PC-9 (cell line): ENCODE measurements at regions of chr5 and their contacts with region 1.

Region 1: GRCh38 chr5:75336625-75337339 is at the start of gene HMGCR:
- DNase-seq: peak; percentile 98
- H3K4me3 ChIP-seq: peak within 1 kb of the TSS; percentile 83
- H3K27ac ChIP-seq: peak within 1 kb of the TSS; percentile 78
- H3K4me1 ChIP-seq: peaks cover 47% of the 10 kb centered on the region
- H3K27me3 ChIP-seq: no peaks in the 10 kb centered on the region
- CTCF ChIP-seq: peak; percentile 11; the same call in 1 of the 2 replicates
- total RNA-seq, gene HMGCR: 55.0 and 86.8 TPM in 2 replicates

Region 2: DNA sequence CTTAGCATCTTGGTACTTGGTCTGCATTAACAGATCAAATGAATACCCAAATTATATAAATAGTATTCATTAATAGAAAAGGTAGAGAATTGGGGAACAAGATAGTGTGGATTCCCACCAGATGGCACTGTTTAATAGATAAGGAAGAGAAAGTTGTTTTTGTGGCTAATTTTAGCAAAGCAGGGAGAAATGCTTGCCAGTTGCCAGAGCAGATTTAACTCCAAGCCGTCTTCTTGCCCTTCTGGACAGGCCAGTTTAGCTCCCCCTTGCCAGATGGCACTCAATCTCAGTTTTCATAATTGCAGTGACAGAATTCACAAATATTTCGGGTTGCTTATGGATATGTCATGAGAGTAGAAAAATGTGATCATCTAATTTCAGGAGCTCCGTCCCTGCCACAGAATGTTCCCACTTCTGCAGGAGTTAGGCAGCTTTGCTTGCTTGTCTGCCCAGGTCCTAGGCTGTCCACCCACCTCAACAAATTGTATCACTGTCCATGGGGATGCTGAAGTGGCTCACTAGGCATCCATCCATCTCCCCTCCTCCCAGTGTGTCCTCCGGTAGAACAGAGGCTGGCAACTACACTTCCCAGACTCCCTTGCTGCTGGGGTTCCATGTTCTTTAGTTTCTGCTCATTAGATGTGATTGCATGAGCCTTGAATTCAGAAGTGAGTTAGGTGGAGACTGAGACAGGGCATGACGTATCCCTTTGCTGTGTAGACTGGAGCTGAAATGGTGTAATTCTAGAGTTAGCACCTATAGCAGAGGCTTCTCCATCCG is 663.6 kb before region 1 on chr5:
- CTCF ChIA-PET with region 1: no interaction called
- POLR2A ChIA-PET with region 1: no interaction called
- intact Hi-C with region 1: loop called (anchors 10 kb)
- DNase-seq: peak; percentile 29 to 66
- H3K4me3 ChIP-seq: no peak overlapping the region
- H3K27ac ChIP-seq: no peak overlapping the region
- H3K4me1 ChIP-seq: peaks cover 9% of the 10 kb centered on the region; the same call in 1 of the 2 replicates
- H3K27me3 ChIP-seq: no peaks in the 10 kb centered on the region
- CTCF ChIP-seq: peak; percentile 63

Region 3: DNA sequence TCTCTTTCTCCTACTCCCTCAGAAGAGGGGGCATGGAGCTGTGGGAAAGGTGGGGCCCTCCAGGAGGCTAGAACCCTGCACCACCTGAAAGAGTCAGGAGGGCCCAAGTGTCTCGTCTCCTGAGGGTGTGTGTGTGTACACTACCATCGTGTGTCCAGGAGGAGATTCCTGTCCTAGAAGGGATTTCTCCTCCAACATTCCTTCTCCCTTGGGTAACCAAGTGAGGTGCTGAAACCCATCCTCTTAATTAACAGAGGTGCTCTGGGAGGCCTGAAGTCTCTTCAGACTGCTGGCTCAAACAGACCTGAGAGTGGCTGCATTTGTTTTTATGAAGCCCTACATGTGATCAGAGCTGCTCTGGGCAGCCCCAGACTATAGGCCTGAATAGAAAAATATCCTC is 409.4 kb before region 1 on chr5:
- CTCF ChIA-PET with region 1: interaction called, 3 read pairs
- POLR2A ChIA-PET with region 1: no interaction called
- intact Hi-C with region 1: loop called (anchors 5 kb)
- DNase-seq: no peak
- H3K4me3 ChIP-seq: no peak overlapping the region
- H3K27ac ChIP-seq: no peak overlapping the region
- H3K4me1 ChIP-seq: no peaks in the 10 kb centered on the region
- H3K27me3 ChIP-seq: no peaks in the 10 kb centered on the region
- CTCF ChIP-seq: no peak

Region 4: GRCh38 chr5:75089137-75089536 is 247.6 kb before region 1 on chr5:
- CTCF ChIA-PET with region 1: no interaction called
- POLR2A ChIA-PET with region 1: interaction called, 18 read pairs
- intact Hi-C with region 1: no loop called
- DNase-seq: peak; percentile 44 to 79
- H3K4me3 ChIP-seq: no peak overlapping the region
- H3K27ac ChIP-seq: peak overlapping the region; percentile 6; the same call in 1 of the 2 replicates
- H3K4me1 ChIP-seq: peaks cover 24% of the 10 kb centered on the region
- H3K27me3 ChIP-seq: no peaks in the 10 kb centered on the region
- CTCF ChIP-seq: no peak

Region 5: DNA sequence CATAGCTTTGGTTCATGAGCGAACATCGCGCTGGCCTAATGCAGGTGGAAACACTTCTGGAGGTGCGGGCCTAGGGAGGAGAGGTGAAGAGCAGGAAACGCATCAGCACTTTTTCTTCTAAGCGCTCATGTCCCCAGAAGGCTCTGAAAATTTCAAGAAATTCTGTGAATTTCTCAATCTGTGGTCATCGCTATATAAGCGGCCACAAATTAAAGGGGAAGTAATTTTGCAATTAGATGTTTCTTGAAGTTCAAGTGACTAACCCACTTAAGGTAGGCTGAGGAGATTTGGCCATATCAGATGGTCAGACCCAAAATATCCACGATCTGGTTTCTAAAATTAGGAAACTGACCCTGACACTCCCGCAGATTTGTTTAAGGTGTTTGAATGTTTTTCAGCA is 16.4 kb before region 1 on chr5:
- CTCF ChIA-PET with region 1: no interaction called
- POLR2A ChIA-PET with region 1: interaction called, 22 read pairs
- intact Hi-C with region 1: no loop called
- DNase-seq: peak in 1 of 2 experiments; percentile 57
- H3K4me3 ChIP-seq: peak overlapping the region; percentile 21; the same call in 1 of the 2 replicates
- H3K27ac ChIP-seq: peak overlapping the region; percentile 96
- H3K4me1 ChIP-seq: peaks cover 38% of the 10 kb centered on the region
- H3K27me3 ChIP-seq: no peaks in the 10 kb centered on the region
- CTCF ChIP-seq: no peak

Region 6: DNA sequence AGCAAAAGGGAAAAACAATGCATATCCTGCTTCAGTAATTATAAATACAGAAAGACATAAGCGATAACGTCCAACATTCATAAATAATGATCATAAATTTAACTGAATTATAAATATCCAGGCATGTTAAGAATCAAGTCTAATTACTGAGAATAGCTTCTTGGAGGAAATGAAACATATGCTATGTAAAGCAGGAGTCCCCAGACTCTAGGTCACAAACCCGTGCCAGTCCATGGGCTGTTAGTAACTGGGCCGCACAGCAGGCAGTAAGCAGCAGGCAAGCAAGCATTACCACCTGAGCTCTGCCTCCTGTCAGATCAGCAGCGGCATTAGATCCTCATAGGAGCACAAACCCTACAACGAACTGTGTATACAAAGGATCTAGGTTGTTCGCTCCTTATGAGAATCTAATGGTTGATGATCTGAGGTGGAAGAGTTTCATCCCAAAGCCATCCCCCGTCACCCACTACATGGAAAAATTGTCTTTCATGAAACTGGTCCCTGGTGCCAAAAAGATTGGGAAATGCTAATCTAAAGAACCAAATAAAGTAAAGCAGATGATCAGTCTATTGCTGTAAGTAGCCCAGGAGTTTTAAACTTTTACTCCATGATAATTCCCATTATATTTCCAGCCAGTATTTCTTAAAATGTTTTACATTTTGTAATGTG is 124.3 kb after region 1 on chr5:
- CTCF ChIA-PET with region 1: no interaction called
- POLR2A ChIA-PET with region 1: no interaction called
- intact Hi-C with region 1: no loop called
- DNase-seq: no peak
- H3K4me3 ChIP-seq: no peak overlapping the region
- H3K27ac ChIP-seq: no peak overlapping the region
- H3K4me1 ChIP-seq: peaks cover 25% of the 10 kb centered on the region
- H3K27me3 ChIP-seq: no peaks in the 10 kb centered on the region
- CTCF ChIP-seq: no peak